A673 (cell line): ENCODE measurements at regions of chr2 and their contacts with region 1.

Region 1: DNA sequence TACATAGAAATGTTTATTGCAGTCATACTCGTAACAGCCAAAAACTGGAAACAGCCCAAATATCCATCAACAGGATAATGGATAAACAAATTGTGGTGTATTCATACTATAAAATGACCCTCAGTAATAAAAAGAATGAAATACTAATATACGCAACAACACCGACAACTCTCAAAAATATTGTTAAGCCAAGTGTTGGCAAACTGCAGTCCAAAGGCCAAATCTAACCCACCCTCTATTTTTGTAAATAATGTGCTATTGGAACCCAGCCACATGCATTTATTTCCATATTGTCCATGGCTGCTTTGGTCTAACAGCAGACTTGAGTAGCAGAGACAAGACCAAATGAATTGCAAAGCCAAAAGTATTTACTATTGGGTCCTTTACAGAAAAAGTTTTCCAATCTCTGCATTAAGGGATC is 151.0 kb downstream of the MREG start:
- DNase-seq: no peak
- H3K4me3 ChIP-seq: no peak overlapping the region
- H3K27ac ChIP-seq: no peak overlapping the region
- H3K4me1 ChIP-seq: peaks cover 15% of the 10 kb centered on the region
- H3K27me3 ChIP-seq: no peaks in the 10 kb centered on the region
- CTCF ChIP-seq: no peak

Region 2: DNA sequence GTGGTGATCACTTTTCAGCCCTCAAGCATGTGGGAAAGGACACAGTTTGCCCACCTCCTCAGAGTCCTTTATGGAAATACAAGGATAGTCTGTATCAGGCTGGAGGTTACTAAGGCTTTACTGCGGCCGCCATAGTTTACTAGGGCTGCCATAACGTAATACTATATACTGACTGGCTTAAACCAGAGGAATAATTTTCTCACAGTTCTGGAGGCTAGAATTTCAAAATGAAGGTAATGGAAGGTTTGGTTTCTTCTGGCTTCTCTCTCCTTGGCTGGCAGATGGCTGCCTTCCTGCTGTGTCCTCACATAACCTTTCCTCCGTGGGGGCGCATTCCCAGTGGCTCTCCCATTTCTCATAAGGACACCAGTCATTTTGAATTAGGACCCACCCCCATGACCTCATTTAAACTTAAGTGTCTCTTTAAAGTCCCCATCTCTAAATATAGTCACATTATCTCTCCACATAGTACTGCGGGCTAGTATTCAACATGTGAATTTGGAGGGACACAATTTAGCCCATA is 563.0 kb before region 1 on chr2:
- CTCF ChIA-PET with region 1: interaction called, 11 read pairs
- POLR2A ChIA-PET with region 1: no interaction called
- intact Hi-C with region 1: no loop called
- DNase-seq: no peak
- H3K4me3 ChIP-seq: no peak overlapping the region
- H3K27ac ChIP-seq: no peak overlapping the region
- H3K4me1 ChIP-seq: no peaks in the 10 kb centered on the region
- H3K27me3 ChIP-seq: no peaks in the 10 kb centered on the region
- CTCF ChIP-seq: no peak

Region 3: GRCh38 chr2:215895330-215895729 is 33.0 kb after region 1 on chr2:
- CTCF ChIA-PET with region 1: no interaction called
- POLR2A ChIA-PET with region 1: no interaction called
- intact Hi-C with region 1: no loop called
- DNase-seq: no peak
- H3K4me3 ChIP-seq: no peak overlapping the region
- H3K27ac ChIP-seq: no peak overlapping the region
- H3K4me1 ChIP-seq: peaks cover 24% of the 10 kb centered on the region
- H3K27me3 ChIP-seq: no peaks in the 10 kb centered on the region
- CTCF ChIP-seq: no peak